PC-9 (cell line): ENCODE measurements at regions of chr14 and their contacts with region 1.

Region 1: DNA sequence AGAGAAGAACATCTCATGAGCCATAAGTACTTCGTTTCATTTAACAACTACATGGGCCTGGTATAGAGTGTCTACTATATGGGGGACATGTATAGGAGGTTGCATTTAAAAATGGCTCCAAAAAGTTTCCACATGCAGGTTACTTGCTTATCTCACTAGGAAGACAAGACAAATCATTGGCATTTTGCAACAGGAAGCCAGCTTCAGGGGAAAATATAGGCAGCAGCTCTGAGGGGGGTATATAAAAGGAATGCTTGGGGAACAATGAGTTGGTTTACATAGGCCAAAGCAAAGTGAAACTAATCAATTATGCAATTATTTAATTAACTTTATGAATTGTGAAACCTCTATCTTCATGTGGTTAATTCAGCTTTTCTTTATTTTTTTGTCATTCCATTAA is 225.3 kb downstream of the KCNH5 start:
- DNase-seq: no peak
- H3K4me3 ChIP-seq: no peak overlapping the region
- H3K27ac ChIP-seq: no peak overlapping the region
- H3K4me1 ChIP-seq: no peaks in the 10 kb centered on the region
- H3K27me3 ChIP-seq: no peaks in the 10 kb centered on the region
- CTCF ChIP-seq: no peak

Region 2: GRCh38 chr14:63203618-63204406 is 383.9 kb after region 1 on chr14:
- CTCF ChIA-PET with region 1: no interaction called
- POLR2A ChIA-PET with region 1: interaction called, 13 read pairs
- intact Hi-C with region 1: no loop called
- DNase-seq: peak in 1 of 2 experiments; percentile 28
- H3K4me3 ChIP-seq: no peak overlapping the region
- H3K27ac ChIP-seq: no peak overlapping the region
- H3K4me1 ChIP-seq: no peaks in the 10 kb centered on the region
- H3K27me3 ChIP-seq: no peaks in the 10 kb centered on the region
- CTCF ChIP-seq: no peak